ENCODE measurements at regions of chr5 and their contacts with region 1.

Region 1: DNA sequence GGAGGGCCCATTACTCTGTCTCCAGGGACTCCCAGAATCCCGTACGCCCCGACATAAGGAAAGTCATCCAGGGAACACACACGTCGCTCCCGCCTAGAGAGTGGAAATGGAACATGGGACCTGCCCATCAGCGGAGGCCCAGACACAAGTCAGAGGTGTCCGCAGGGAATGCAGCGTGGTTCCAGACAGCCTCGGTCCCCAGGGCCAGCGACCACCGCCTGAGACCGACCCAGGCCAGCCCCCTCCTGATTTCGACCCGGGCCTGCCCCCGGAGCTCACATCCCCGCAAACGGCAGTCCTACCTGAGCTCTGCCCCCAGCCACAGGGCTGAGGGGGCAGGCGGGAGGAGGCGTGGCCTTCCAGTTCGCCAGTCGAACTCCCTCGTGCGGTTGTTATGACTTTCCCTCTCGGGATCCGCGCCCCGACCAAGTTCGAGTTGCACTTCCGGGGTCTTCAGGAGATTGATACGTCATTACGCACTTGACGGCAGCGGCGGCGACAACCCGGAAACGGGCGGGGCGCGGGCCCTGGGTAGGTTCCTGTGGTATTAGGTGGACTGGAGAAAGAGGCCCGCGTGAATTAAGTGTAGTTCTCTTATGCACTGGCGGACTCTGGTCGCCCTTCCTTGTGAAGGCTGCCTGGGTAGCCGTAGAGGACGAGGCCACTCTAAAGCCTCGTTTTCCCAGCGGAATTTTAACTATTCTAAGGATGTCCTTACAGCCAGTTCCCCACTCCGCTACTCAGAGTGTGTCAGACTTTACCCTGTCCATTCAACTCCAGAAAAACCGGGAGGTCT is 370.0 kb upstream of the POU5F2 start:
- DNase-seq: peak; percentile 79 to 95 (median 93)
- ATAC-seq: peak; percentile 94
- H3K4me3 ChIP-seq: peak overlapping the region; percentile 73 to 90
- H3K4me3 Mint-ChIP-seq: peak overlapping the region; percentile 91
- H3K27ac ChIP-seq: peak overlapping the region; percentile 79 to 87
- H3K27ac Mint-ChIP-seq: peak overlapping the region; percentile 95
- H3K4me1 ChIP-seq: peaks cover 8% of the 10 kb centered on the region
- H3K4me1 Mint-ChIP-seq: peaks cover 44% of the 10 kb centered on the region
- H3K27me3 ChIP-seq: no peaks in the 10 kb centered on the region
- H3K27me3 Mint-ChIP-seq: peaks cover 3% of the 10 kb centered on the region
- CTCF ChIP-seq: no peak

Region 2: GRCh38 chr5:93620487-93621326 is 490.7 kb before region 1 on chr5:
- CTCF ChIA-PET with region 1: no interaction called
- POLR2A ChIA-PET with region 1: no interaction called
- intact Hi-C with region 1: loop called in 1 of 2 experiments (anchors 10 kb)
- DNase-seq: peak; percentile 18 to 78 (median 58)
- ATAC-seq: peak; percentile 64
- H3K4me3 ChIP-seq: peak overlapping the region; percentile 48 to 61
- H3K4me3 Mint-ChIP-seq: peak overlapping the region; percentile 93
- H3K27ac ChIP-seq: peak overlapping the region in 1 of 2 experiments; percentile 8
- H3K27ac Mint-ChIP-seq: peak overlapping the region; percentile 84
- H3K4me1 ChIP-seq: peaks cover 21% of the 10 kb centered on the region
- H3K4me1 Mint-ChIP-seq: peaks cover 23% of the 10 kb centered on the region
- H3K27me3 ChIP-seq: no peaks in the 10 kb centered on the region
- H3K27me3 Mint-ChIP-seq: peaks cover 10% of the 10 kb centered on the region
- CTCF ChIP-seq: no peak

Region 3: DNA sequence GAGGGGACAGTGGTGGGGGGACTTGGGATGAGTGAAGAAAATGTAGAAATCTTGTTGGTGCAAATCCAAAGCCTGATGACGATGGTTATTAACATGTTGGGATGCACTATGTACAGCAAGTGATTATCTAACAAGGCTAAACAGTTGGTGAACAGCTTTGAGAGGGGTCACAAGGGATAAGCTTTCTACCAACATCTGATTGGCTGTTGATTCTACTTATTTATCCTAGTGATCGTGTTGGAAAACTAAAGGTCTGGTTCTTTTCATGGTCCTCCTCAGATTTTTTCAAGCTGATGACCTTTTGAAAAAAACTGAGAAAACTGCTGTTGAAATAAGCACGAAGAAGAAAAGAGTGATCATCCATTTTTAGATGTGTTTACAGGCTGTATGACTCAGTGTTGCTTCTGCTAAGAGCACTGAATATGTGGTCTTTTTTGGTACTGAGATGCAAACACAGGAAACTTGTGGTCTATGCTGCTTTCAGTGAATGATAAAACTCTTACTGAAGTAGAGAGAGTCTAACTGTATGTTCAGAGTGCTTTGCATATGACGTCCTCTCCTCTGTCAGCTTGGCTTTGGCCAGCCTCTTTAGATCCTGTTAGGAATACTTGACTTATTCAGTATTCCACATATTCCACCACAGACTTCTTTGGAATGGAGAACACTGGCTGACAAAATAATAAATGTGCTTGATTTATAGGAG is 681.9 kb after region 1 on chr5:
- CTCF ChIA-PET with region 1: no interaction called
- POLR2A ChIA-PET with region 1: no interaction called
- intact Hi-C with region 1: loop called in 1 of 2 experiments (anchors 10 kb)
- DNase-seq: peak in 4 of 9 experiments; percentile 4 to 81 (median 40)
- ATAC-seq: peak; percentile 92
- H3K4me3 ChIP-seq: no peak overlapping the region
- H3K4me3 Mint-ChIP-seq: peak overlapping the region; percentile 44
- H3K27ac ChIP-seq: peak overlapping the region; percentile 20 to 80
- H3K27ac Mint-ChIP-seq: peak overlapping the region; percentile 92
- H3K4me1 ChIP-seq: peaks cover 30% of the 10 kb centered on the region
- H3K4me1 Mint-ChIP-seq: peaks cover 37% of the 10 kb centered on the region
- H3K27me3 ChIP-seq: no peaks in the 10 kb centered on the region
- H3K27me3 Mint-ChIP-seq: no peaks in the 10 kb centered on the region
- CTCF ChIP-seq: no peak

Measured in CD8-positive, alpha-beta T cell (primary cell).